K562 (cell line): ENCODE measurements at regions of chr4 and their contacts with region 1.

Region 1: DNA sequence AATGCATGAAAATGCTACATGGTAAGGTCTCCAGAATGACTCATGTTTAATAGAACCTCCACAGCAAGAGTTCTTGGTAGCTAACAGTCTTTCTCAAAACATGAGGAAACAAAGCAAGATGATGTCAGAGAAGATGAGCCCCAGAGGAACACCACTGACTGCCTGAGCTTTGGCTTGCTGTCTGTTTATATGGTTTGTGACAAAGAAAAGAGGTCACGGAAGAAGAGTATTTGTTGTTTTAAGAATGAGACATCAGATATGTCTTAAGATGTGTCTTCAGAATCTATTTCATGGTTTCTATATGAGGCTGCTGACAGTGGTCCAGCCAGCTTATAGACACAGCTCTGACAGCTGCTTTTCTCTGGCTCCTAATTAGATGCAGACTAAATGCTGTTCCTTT is 18.8 kb upstream of the AREG start:
- DNase-seq: no peak
- ATAC-seq: no peak
- H3K4me3 ChIP-seq: no peak overlapping the region
- H3K27ac ChIP-seq: no peak overlapping the region
- H3K4me1 ChIP-seq: peaks cover 0 to 10% of the 10 kb centered on the region in 2 experiments; a peak in 2 of 5 replicates
- H3K27me3 ChIP-seq: no peaks in the 10 kb centered on the region
- CTCF ChIP-seq: no peak
- EP300 ChIP-seq: no peak
- POLR2A ChIP-seq: no peak
- RAD21 ChIP-seq: no peak

Region 2: GRCh38 chr4:74444891-74445642 is 19.0 kb after region 1 on chr4 and contains the start of gene AREG:
- CTCF ChIA-PET with region 1: no interaction called
- POLR2A ChIA-PET with region 1: interaction called, 12 read pairs
- in situ Hi-C with region 1: no loop called
- intact Hi-C with region 1: no loop called
- DNase-seq: peak; percentile 78 to 91 (median 84)
- ATAC-seq: peak; percentile 83
- H3K4me3 ChIP-seq: peak within 1 kb of the TSS; percentile 57
- H3K27ac ChIP-seq: peak within 1 kb of the TSS; percentile 74
- H3K4me1 ChIP-seq: peaks cover 7 to 31% of the 10 kb centered on the region in 2 experiments; a peak in 3 of 5 replicates
- H3K27me3 ChIP-seq: no peaks in the 10 kb centered on the region
- CTCF ChIP-seq: peak; percentile 69 to 87 (median 69)
- EP300 ChIP-seq: no peak
- POLR2A ChIP-seq: peak; percentile 62
- RAD21 ChIP-seq: peak in 1 of 2 experiments; percentile 56; a peak in 2 of 4 replicates
- polyA plus RNA-seq, gene AREG: 1.4 to 2.4 TPM